Activated T-helper 2 cell treated with anti-CD3 and anti-CD28 coated beads, Interferon-gamma antibody, Interleukin-2, Interleukin-4, amounts not matched to agents 10 μg/mL and 5 μg/mL and 100 μg/mL, durations not matched to agents 14 hours and 24 hours and 36 hours (primary cell): ENCODE measurements at regions of chr1 and their contacts with region 1.

Region 1: GRCh38 chr1:174743654-174744561 is 255.8 kb upstream of the CACYBP start:
- DNase-seq: no peak
- H3K4me3 Mint-ChIP-seq: no peak overlapping the region
- H3K27ac Mint-ChIP-seq: no peak overlapping the region
- H3K4me1 Mint-ChIP-seq: no peaks in the 10 kb centered on the region
- H3K27me3 Mint-ChIP-seq: no peaks in the 10 kb centered on the region

Region 2: DNA sequence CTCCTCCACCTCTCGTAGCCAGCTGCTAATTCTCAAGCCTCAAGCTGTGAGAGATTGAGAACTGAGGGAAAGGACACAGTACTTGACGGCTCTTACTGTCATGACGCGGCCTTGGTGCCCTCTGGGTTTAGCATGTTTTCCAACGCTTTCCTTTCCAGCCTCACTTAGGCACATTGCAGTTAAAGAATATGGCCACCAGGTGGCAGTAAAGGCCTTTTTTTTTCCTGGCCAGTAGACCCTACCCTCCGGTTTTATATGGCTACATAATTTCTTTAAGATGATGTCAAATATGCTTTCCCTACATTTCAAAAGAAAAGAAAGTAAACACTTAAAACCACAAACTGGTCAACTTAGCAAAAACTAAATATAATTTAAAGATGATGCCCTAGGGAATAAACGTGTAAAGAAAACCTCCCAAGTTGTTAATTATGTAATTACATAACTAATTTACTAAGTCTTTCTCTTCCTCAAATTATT is 1323.5 kb before region 1 on chr1:
- intact Hi-C with region 1: loop called (anchors 5 kb)
- DNase-seq: peak; percentile 55
- H3K4me3 Mint-ChIP-seq: no peak overlapping the region
- H3K27ac Mint-ChIP-seq: no peak overlapping the region
- H3K4me1 Mint-ChIP-seq: peaks cover 3% of the 10 kb centered on the region
- H3K27me3 Mint-ChIP-seq: no peaks in the 10 kb centered on the region

Region 3: DNA sequence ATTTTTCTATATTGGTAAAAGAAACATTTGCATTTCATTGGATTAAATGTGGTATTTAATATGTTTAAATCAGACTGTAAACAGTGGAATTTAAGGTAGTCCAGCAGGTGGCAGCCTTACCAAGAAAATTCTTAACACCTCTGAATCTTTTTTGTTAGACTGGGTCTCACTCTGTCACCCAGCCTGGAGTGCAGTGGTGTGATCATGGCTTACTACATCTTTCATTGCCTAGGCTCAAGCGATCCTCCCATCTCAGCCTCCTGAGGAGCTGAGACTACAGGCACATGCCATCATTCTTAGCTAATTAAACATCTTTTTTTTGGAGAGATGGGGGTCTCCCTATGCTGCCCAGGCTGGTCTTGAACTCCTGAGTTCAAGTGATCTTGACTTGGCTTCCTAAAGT is 485.8 kb before region 1 on chr1:
- intact Hi-C with region 1: loop called (anchors 2 kb)
- DNase-seq: no peak
- H3K4me3 Mint-ChIP-seq: no peak overlapping the region
- H3K27ac Mint-ChIP-seq: no peak overlapping the region
- H3K4me1 Mint-ChIP-seq: no peaks in the 10 kb centered on the region
- H3K27me3 Mint-ChIP-seq: no peaks in the 10 kb centered on the region

Region 4: GRCh38 chr1:174769961-174770549 is 26.1 kb after region 1 on chr1:
- intact Hi-C with region 1: no loop called
- DNase-seq: no peak
- H3K4me3 Mint-ChIP-seq: no peak overlapping the region
- H3K27ac Mint-ChIP-seq: no peak overlapping the region
- H3K4me1 Mint-ChIP-seq: no peaks in the 10 kb centered on the region
- H3K27me3 Mint-ChIP-seq: no peaks in the 10 kb centered on the region